WTC11 (cell line): ENCODE measurements at regions of chr1 and their contacts with region 1.

Region 1: GRCh38 chr1:28602536-28603439 is 10.7 kb downstream of the RAB42 start:
- DNase-seq: peak; percentile 57
- ATAC-seq: peak; percentile 67
- H3K4me3 Mint-ChIP-seq: no peak overlapping the region
- H3K27ac Mint-ChIP-seq: peak overlapping the region; percentile 91; the same call in 1 of the 2 replicates
- H3K4me1 Mint-ChIP-seq: peaks cover 23% of the 10 kb centered on the region
- H3K27me3 Mint-ChIP-seq: no peaks in the 10 kb centered on the region
- CTCF ChIP-seq: peak; percentile 24; the same call in 1 of the 2 replicates

Region 2: DNA sequence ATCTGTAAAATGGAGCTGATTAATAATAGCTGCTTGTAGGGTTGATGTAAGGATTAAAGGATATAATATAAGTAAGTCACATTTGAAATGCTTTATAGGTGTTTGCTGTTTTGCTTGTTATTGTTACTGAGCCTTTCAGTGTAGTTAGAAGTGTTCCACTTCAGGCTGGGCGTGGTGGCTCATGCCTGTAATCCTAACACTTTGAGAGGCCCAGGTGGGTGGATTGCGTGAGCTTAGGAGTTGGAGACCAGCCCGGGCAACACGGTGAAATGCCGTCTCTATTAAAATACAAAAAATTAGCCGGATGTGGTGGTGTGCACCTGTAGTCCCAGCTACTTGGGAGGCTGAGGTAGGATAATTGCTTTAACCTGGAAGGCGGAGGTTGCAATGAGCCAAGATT is 37.7 kb before region 1 on chr1:
- CTCF ChIA-PET with region 1: interaction called, 10 read pairs
- POLR2A ChIA-PET with region 1: interaction called, 3 read pairs
- DNase-seq: no peak
- ATAC-seq: no peak
- H3K4me3 Mint-ChIP-seq: no peak overlapping the region
- H3K27ac Mint-ChIP-seq: no peak overlapping the region
- H3K4me1 Mint-ChIP-seq: no peaks in the 10 kb centered on the region
- H3K27me3 Mint-ChIP-seq: no peaks in the 10 kb centered on the region
- CTCF ChIP-seq: no peak

Region 3: GRCh38 chr1:28656335-28656734 is 53.5 kb after region 1 on chr1:
- CTCF ChIA-PET with region 1: no interaction called
- POLR2A ChIA-PET with region 1: no interaction called
- DNase-seq: no peak
- ATAC-seq: no peak
- H3K4me3 Mint-ChIP-seq: no peak overlapping the region
- H3K27ac Mint-ChIP-seq: no peak overlapping the region
- H3K4me1 Mint-ChIP-seq: no peaks in the 10 kb centered on the region
- H3K27me3 Mint-ChIP-seq: no peaks in the 10 kb centered on the region
- CTCF ChIP-seq: no peak